Dorsolateral prefrontal cortex (tissue), 120 donors: ENCODE measurements at regions of chr4 and their contacts with region 1.

Region 1: GRCh38 chr4:13654158-13654797 is 26.8 kb upstream of the BOD1L1 start:
- DNase-seq: peak; percentile 74 to 90 (median 86)
- H3K4me3 ChIP-seq: peak overlapping the region; percentile 40 to 86 (median 68)
- H3K27ac ChIP-seq: peak overlapping the region in 55 of 59 donors; percentile 24 to 96 (median 87)
- H3K27me3 ChIP-seq: no peaks in the 10 kb centered on the region
- CTCF ChIP-seq: peak; percentile 41 to 91 (median 78)

Region 2: GRCh38 chr4:13783800-13784411 is 129.6 kb after region 1 on chr4:
- intact Hi-C with region 1: loop called in 1 of 2 experiments (anchors 2 kb)
- DNase-seq: peak in 9 of 10 donors; percentile 48 to 92 (median 78)
- H3K4me3 ChIP-seq: peak overlapping the region in 19 of 59 donors; percentile 6 to 34 (median 19)
- H3K27ac ChIP-seq: peak overlapping the region in 58 of 59 donors; percentile 57 to 98 (median 90)
- H3K27me3 ChIP-seq: no peaks in the 10 kb centered on the region
- CTCF ChIP-seq: peak in 5 of 56 donors; percentile 12 to 30 (median 19)

Region 3: DNA sequence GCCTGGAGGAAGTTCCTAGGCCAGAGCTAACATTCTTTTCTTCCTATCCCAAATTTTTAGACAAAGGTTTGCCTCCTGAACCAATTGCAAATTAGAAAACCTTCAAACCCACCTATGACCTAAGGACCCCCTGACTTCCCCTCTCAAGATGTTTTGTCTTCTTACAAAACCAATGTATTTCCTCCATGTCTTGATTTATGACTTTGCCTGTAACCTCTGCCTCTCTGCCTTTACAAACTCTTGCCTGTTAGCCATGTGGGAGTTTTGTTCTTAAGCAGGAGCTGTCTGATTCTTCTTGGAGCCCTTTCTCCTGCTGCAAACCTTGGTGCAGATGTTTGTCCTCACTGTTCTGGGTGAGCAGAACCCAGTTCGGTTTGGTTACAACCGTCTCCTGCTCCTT is 195.5 kb after region 1 on chr4:
- intact Hi-C with region 1: loop called in 1 of 2 experiments (anchors 10 kb)
- DNase-seq: no peak
- H3K4me3 ChIP-seq: no peak overlapping the region
- H3K27ac ChIP-seq: peak overlapping the region in 4 of 59 donors; percentile 5 to 54 (median 40)
- H3K27me3 ChIP-seq: no peaks in the 10 kb centered on the region
- CTCF ChIP-seq: no peak

Region 4: GRCh38 chr4:13860126-13860525 is 205.8 kb after region 1 on chr4:
- intact Hi-C with region 1: loop called (anchors 2 to 10 kb)
- DNase-seq: peak in 2 of 10 donors; percentile 36 to 48
- H3K4me3 ChIP-seq: no peak overlapping the region
- H3K27ac ChIP-seq: no peak overlapping the region
- H3K27me3 ChIP-seq: no peaks in the 10 kb centered on the region
- CTCF ChIP-seq: peak in 47 of 56 donors; percentile 12 to 71 (median 42)

Region 5: DNA sequence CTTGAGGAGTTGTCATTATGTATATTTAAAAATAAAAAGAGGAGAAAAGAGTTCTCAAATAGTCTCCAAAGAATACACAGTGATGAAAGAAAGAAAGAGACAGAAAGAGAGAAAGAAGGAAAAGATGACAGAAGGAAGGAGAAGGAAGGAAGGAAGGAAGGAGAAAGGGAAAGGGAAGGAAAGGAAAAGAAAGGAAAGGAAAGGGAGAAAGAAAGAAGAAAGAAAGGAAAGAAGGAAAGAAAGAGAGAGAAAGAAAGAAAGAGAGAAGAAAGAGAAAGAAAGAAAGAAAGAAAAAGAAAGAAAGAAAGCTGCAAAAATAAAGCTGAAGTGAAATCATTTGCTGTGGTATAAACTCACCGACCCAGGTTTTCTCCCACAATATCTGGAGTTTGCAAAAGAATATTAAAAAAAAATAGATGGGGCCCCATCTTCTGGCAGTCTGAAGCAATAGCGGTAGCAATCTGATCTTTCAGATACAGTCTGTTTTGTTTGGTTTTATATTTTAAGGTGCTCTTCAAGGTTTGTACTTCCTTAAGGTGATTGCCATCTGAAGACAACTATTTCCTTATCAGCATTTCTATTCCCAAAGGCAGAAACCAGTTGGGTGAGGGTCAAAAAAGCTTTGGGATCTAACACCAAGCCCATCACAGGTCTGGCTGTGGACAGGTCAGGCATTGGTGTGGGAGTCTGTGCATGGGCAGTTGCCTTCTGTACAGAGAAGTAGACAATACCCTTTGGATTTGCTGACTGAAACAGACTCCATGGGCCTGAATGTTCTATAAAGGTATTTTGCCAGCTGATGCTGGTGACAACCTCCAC is 1508.4 kb after region 1 on chr4:
- intact Hi-C with region 1: loop called in 1 of 2 experiments (anchors 10 kb)
- DNase-seq: no peak
- H3K4me3 ChIP-seq: no peak overlapping the region
- H3K27ac ChIP-seq: peak overlapping the region in 1 of 59 donors; percentile 14
- H3K27me3 ChIP-seq: peaks cover 0 to 3% (median 0%) of the 10 kb centered on the region in 45 donors
- CTCF ChIP-seq: peak in 53 of 56 donors; percentile 26 to 71 (median 48)